ENCODE measurements at regions of chr7 and their contacts with region 1.

Region 1: GRCh38 chr7:97027427-97028234 is 3.0 kb upstream of the DLX5 start:
- DNase-seq: peak; percentile 69 to 87 (median 83)
- H3K4me3 ChIP-seq: no peak overlapping the region
- H3K27ac ChIP-seq: no peak overlapping the region
- H3K4me1 ChIP-seq: peaks cover 2% of the 10 kb centered on the region
- H3K27me3 ChIP-seq: no peaks in the 10 kb centered on the region
- CTCF ChIP-seq: peak; percentile 75 to 87 (median 75)
- EP300 ChIP-seq: no peak
- POLR2A ChIP-seq: no peak

Region 2: GRCh38 chr7:95723592-95724180 is 1303.9 kb before region 1 on chr7:
- intact Hi-C with region 1: loop called in 1 of 4 experiments (anchors 10 kb)
- DNase-seq: peak; percentile 29 to 47 (median 42)
- H3K4me3 ChIP-seq: no peak overlapping the region
- H3K27ac ChIP-seq: no peak overlapping the region
- H3K4me1 ChIP-seq: no peaks in the 10 kb centered on the region
- H3K27me3 ChIP-seq: no peaks in the 10 kb centered on the region
- CTCF ChIP-seq: peak in 2 of 3 donors; percentile 29 to 43
- EP300 ChIP-seq: no peak
- POLR2A ChIP-seq: no peak

Region 3: GRCh38 chr7:95916573-95917297 is 1110.9 kb before region 1 on chr7:
- intact Hi-C with region 1: loop called (anchors 5 to 10 kb)
- DNase-seq: peak; percentile 74 to 92 (median 90)
- H3K4me3 ChIP-seq: no peak overlapping the region
- H3K27ac ChIP-seq: peak overlapping the region in 1 of 2 donors; percentile 51
- H3K4me1 ChIP-seq: peaks cover 2% of the 10 kb centered on the region
- H3K27me3 ChIP-seq: no peaks in the 10 kb centered on the region
- CTCF ChIP-seq: peak; percentile 72 to 86 (median 85)
- EP300 ChIP-seq: no peak
- POLR2A ChIP-seq: no peak

Region 4: GRCh38 chr7:96075510-96076349 is 951.9 kb before region 1 on chr7:
- intact Hi-C with region 1: loop called in 3 of 4 experiments (anchors 2 to 5 kb)
- DNase-seq: peak; percentile 72 to 83 (median 78)
- H3K4me3 ChIP-seq: peak overlapping the region; percentile 46
- H3K27ac ChIP-seq: peak overlapping the region in 1 of 2 donors; percentile 64
- H3K4me1 ChIP-seq: no peaks in the 10 kb centered on the region
- H3K27me3 ChIP-seq: no peaks in the 10 kb centered on the region
- CTCF ChIP-seq: peak; percentile 67 to 74 (median 71)
- EP300 ChIP-seq: no peak
- POLR2A ChIP-seq: no peak

Region 5: GRCh38 chr7:97094284-97094930 is 66.8 kb after region 1 on chr7:
- intact Hi-C with region 1: no loop called
- DNase-seq: no peak
- H3K4me3 ChIP-seq: no peak overlapping the region
- H3K27ac ChIP-seq: no peak overlapping the region
- H3K4me1 ChIP-seq: no peaks in the 10 kb centered on the region
- H3K27me3 ChIP-seq: no peaks in the 10 kb centered on the region
- CTCF ChIP-seq: no peak
- EP300 ChIP-seq: no peak
- POLR2A ChIP-seq: no peak